ENCODE measurements at regions of chr2 and their contacts with region 1.

Region 1: GRCh38 chr2:197191177-197191939 is 119.2 kb downstream of the ANKRD44 start:
- DNase-seq: peak in 7 of 9 donors; percentile 59 to 75 (median 72)
- ATAC-seq: peak; percentile 78
- H3K4me3 ChIP-seq: no peak overlapping the region
- H3K4me3 Mint-ChIP-seq: peak overlapping the region in 9 of 10 donors; percentile 12 to 78 (median 51)
- H3K27ac ChIP-seq: peak overlapping the region; percentile 65
- H3K27ac Mint-ChIP-seq: peak overlapping the region; percentile 74 to 91 (median 79)
- H3K4me1 ChIP-seq: peaks cover 56 to 72% of the 10 kb centered on the region in 2 donors
- H3K4me1 Mint-ChIP-seq: peaks cover 49 to 95% (median 90%) of the 10 kb centered on the region in 7 donors
- H3K27me3 ChIP-seq: no peaks in the 10 kb centered on the region
- H3K27me3 Mint-ChIP-seq: no peaks in the 10 kb centered on the region

Region 2: GRCh38 chr2:196220671-196221070 is 970.7 kb before region 1 on chr2:
- CTCF ChIA-PET with region 1: no interaction called
- POLR2A ChIA-PET with region 1: no interaction called
- intact Hi-C with region 1: no loop called
- DNase-seq: peak in 7 of 9 donors; percentile 47 to 77 (median 64)
- ATAC-seq: peak; percentile 92
- H3K4me3 ChIP-seq: peak overlapping the region; percentile 1
- H3K4me3 Mint-ChIP-seq: peak overlapping the region; percentile 1 to 80 (median 62)
- H3K27ac ChIP-seq: peak overlapping the region; percentile 26
- H3K27ac Mint-ChIP-seq: peak overlapping the region in 8 of 9 donors; percentile 77 to 88 (median 80)
- H3K4me1 ChIP-seq: peaks cover under 1 to 62% of the 10 kb centered on the region in 2 donors
- H3K4me1 Mint-ChIP-seq: peaks cover 50 to 86% (median 85%) of the 10 kb centered on the region in 7 donors
- H3K27me3 ChIP-seq: no peaks in the 10 kb centered on the region
- H3K27me3 Mint-ChIP-seq: no peaks in the 10 kb centered on the region

Region 3: DNA sequence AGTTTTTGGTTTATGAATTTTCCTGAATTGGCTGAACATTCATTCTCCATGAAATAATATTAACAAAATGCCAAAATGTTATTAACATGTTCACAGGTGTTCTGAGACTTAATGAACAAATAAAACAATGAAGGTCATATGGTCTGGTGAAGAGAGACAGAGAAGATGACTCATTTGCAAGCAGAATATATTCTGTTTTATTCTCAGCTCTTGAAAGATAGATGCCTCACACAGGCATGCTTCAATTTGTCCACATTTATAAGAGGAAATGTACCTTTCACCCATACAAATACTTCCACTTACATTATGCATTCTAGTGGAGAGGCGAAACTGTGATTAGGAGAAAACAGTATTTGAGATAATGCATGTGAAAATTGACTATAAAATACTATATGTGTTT is 189.4 kb before region 1 on chr2:
- CTCF ChIA-PET with region 1: no interaction called
- POLR2A ChIA-PET with region 1: no interaction called
- intact Hi-C with region 1: no loop called
- DNase-seq: no peak
- ATAC-seq: no peak
- H3K4me3 ChIP-seq: no peak overlapping the region
- H3K4me3 Mint-ChIP-seq: no peak overlapping the region
- H3K27ac ChIP-seq: no peak overlapping the region
- H3K27ac Mint-ChIP-seq: peak overlapping the region in 2 of 9 donors; percentile 8 to 19
- H3K4me1 ChIP-seq: no peaks in the 10 kb centered on the region
- H3K4me1 Mint-ChIP-seq: peaks cover 0 to 11% (median 0%) of the 10 kb centered on the region in 7 donors
- H3K27me3 ChIP-seq: no peaks in the 10 kb centered on the region
- H3K27me3 Mint-ChIP-seq: no peaks in the 10 kb centered on the region

Region 4: GRCh38 chr2:197113275-197113711 is 78.1 kb before region 1 on chr2:
- CTCF ChIA-PET with region 1: interaction called, 44 read pairs
- POLR2A ChIA-PET with region 1: interaction called, 3 read pairs
- intact Hi-C with region 1: loop called (anchors 1 kb)
- DNase-seq: peak in 7 of 9 donors; percentile 22 to 58 (median 42)
- ATAC-seq: peak; percentile 70
- H3K4me3 ChIP-seq: no peak overlapping the region
- H3K4me3 Mint-ChIP-seq: no peak overlapping the region
- H3K27ac ChIP-seq: peak overlapping the region; percentile 1
- H3K27ac Mint-ChIP-seq: peak overlapping the region; percentile 36 to 95 (median 76)
- H3K4me1 ChIP-seq: peaks cover 0 to 13% of the 10 kb centered on the region in 2 donors
- H3K4me1 Mint-ChIP-seq: peaks cover 21 to 43% (median 38%) of the 10 kb centered on the region in 7 donors
- H3K27me3 ChIP-seq: no peaks in the 10 kb centered on the region
- H3K27me3 Mint-ChIP-seq: no peaks in the 10 kb centered on the region

Region 5: DNA sequence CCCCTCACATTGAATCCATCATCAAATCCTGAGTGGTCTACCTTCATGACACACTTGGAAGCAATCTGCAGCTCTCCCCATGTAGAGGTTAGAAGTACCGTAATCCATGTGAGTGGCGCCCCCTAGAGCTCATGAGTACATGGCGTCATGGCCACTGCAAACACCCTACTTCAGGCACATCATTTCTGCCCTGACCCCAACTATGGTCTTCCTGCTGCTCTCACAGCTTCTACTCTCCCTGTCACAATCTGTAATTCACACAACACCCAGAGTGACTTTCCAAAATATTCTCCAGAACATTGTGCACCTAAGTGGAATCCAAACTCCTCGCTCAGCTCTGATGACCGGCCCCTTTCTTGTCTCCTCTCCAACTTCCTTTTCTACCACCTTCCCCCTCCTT is 22.7 kb before region 1 on chr2:
- CTCF ChIA-PET with region 1: interaction called, 6 read pairs
- POLR2A ChIA-PET with region 1: interaction called, 3 read pairs
- intact Hi-C with region 1: loop called in 1 of 2 experiments (anchors 2 kb)
- DNase-seq: peak; percentile 21 to 63 (median 53)
- ATAC-seq: peak; percentile 91
- H3K4me3 ChIP-seq: no peak overlapping the region
- H3K4me3 Mint-ChIP-seq: peak overlapping the region in 7 of 10 donors; percentile 1 to 59 (median 19)
- H3K27ac ChIP-seq: no peak overlapping the region
- H3K27ac Mint-ChIP-seq: peak overlapping the region; percentile 25 to 93 (median 84)
- H3K4me1 ChIP-seq: peaks cover 3 to 60% of the 10 kb centered on the region in 2 donors
- H3K4me1 Mint-ChIP-seq: peaks cover 45 to 91% (median 82%) of the 10 kb centered on the region in 7 donors
- H3K27me3 ChIP-seq: no peaks in the 10 kb centered on the region
- H3K27me3 Mint-ChIP-seq: no peaks in the 10 kb centered on the region

Region 6: DNA sequence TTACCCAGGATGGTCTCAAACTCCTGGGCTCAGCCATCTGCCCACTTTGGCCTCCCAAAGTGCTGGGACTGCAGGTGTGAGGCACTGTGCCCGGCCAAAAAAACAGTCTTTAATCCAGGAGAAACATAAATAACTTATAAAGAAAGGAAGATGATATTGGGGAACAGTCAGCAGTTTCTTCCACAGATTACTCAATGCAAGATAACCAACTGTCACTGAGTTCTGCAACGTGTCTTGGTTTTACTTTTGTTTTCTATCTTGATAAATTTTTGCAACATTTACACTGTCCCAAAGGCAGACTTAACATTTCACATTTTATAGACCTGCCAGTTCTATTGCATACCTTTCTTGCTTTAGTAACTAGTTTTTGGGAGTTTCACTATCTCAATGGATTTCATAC is 48.1 kb after region 1 on chr2:
- CTCF ChIA-PET with region 1: interaction called, 8 read pairs
- POLR2A ChIA-PET with region 1: interaction called, 3 read pairs
- intact Hi-C with region 1: loop called in 1 of 2 experiments (anchors 2 kb)
- DNase-seq: peak in 1 of 9 donors; percentile 30
- ATAC-seq: peak; percentile 48
- H3K4me3 ChIP-seq: peak overlapping the region; percentile 52
- H3K4me3 Mint-ChIP-seq: peak overlapping the region; percentile 72 to 91 (median 83)
- H3K27ac ChIP-seq: peak overlapping the region; percentile 70
- H3K27ac Mint-ChIP-seq: peak overlapping the region; percentile 87 to 98 (median 94)
- H3K4me1 ChIP-seq: peaks cover 86 to 87% of the 10 kb centered on the region in 2 donors
- H3K4me1 Mint-ChIP-seq: peaks cover 62 to 95% (median 89%) of the 10 kb centered on the region in 7 donors
- H3K27me3 ChIP-seq: no peaks in the 10 kb centered on the region
- H3K27me3 Mint-ChIP-seq: no peaks in the 10 kb centered on the region

Region 7: DNA sequence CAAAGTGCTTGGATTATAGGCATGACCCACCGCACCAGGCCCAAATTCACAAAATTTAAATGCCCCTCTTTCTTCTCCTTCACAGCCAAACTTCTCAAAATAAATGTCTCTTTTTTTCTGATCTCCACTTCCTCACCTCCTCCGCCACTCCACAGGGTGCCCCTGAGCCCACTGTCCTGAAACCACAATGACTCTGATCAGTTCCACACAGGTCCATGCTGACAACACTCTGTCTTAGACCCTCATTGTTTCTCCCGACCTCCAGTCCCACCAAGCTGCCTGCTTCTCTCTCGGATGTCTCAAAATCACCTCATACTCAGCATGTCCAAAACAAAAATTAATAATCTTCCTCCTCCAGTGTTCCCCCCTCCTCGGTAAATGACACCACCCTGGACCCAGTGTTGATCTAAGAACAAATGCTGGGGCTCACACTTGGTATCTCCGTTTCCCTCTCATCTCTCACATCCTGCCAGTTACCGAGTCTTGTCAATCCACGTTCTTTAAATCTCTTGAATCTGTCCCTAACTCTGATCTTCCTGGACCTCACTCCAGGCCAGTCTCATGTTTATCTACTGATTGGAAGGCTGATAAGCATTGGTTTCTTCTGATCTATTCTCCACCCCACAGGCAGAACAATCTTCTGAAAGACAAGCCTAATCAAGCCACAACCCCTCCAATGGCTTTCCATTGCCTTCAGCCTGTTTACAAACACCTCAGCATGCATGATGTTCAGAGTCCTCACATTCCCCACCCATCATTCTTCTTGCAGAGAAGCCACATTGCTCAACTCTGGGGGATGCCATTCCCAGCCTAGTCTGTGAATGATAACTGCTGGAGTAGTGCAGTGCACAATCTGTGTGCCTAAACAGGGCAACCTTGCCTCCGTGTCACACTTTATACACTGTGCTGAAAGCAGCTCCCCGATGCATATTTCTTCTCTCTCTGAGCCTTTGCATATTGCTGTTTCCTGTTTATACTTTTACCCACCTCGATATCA is 131.7 kb after region 1 on chr2:
- CTCF ChIA-PET with region 1: interaction called, 11 read pairs
- POLR2A ChIA-PET with region 1: interaction called, 5 read pairs
- intact Hi-C with region 1: loop called in 1 of 2 experiments (anchors 1 kb)
- DNase-seq: peak in 6 of 9 donors; percentile 43 to 65 (median 50)
- ATAC-seq: peak; percentile 76
- H3K4me3 ChIP-seq: peak overlapping the region; percentile 36
- H3K4me3 Mint-ChIP-seq: peak overlapping the region; percentile 68 to 88 (median 76)
- H3K27ac ChIP-seq: peak overlapping the region; percentile 73
- H3K27ac Mint-ChIP-seq: peak overlapping the region; percentile 96 to 99 (median 97)
- H3K4me1 ChIP-seq: peaks cover 33 to 59% of the 10 kb centered on the region in 2 donors
- H3K4me1 Mint-ChIP-seq: peaks cover 43 to 81% (median 71%) of the 10 kb centered on the region in 7 donors
- H3K27me3 ChIP-seq: no peaks in the 10 kb centered on the region
- H3K27me3 Mint-ChIP-seq: no peaks in the 10 kb centered on the region

Region 8: DNA sequence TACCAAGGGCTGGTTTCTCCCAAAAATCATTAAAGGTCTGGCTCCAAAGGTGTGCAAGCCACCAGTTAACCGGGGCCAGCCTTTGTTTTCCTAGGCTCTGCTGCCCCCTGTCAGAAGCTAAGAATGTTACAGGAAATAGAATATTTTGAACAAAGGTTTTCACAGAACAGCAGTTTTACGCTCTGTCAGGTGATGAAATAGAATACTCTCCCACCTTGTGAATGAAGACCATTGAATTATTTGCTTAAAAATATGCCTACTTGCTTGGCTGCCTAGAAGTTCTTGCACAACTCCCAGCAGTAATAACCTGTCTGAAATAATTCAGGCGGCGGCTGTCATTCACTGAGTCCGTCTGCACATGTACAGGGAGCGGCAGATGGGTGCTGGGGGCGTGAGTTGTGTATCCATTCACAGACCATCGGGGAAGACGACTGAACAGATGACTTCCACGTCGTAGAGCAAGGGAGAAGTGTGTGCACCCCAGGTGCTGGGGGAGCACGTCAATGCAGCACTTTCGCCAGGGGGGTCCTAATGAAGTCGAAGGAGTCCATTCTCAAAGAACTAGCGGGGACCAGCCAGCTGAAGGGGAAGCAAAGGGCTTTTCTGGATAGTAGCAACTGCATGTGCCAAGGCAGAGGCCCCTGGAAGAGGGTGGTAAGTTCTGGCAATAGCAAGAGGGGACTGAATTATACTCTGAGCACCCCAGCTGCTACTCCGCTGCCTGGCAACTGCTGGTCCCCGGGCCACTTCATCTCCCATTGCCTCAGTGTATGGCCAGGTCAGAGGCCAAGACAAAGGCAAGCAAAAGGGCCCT is 187.3 kb after region 1 on chr2:
- CTCF ChIA-PET with region 1: interaction called, 9 read pairs
- POLR2A ChIA-PET with region 1: interaction called, 9 read pairs
- intact Hi-C with region 1: loop called (anchors 1 kb)
- DNase-seq: peak; percentile 26 to 72 (median 61)
- ATAC-seq: peak; percentile 83
- H3K4me3 ChIP-seq: no peak overlapping the region
- H3K4me3 Mint-ChIP-seq: peak overlapping the region in 2 of 10 donors; percentile 21 to 47
- H3K27ac ChIP-seq: no peak overlapping the region
- H3K27ac Mint-ChIP-seq: peak overlapping the region in 2 of 9 donors; percentile 45 to 75
- H3K4me1 ChIP-seq: peaks cover 0 to 6% of the 10 kb centered on the region in 2 donors
- H3K4me1 Mint-ChIP-seq: peaks cover 9 to 27% (median 16%) of the 10 kb centered on the region in 7 donors
- H3K27me3 ChIP-seq: no peaks in the 10 kb centered on the region
- H3K27me3 Mint-ChIP-seq: peaks cover 0 to 12% (median 0%) of the 10 kb centered on the region in 5 donors